Dorsolateral prefrontal cortex (tissue), 120 donors: ENCODE measurements at regions of chr11 and their contacts with region 1.

Region 1: GRCh38 chr11:3091791-3092602 is 34.8 kb upstream of the CARS1 start:
- DNase-seq: peak in 9 of 10 donors; percentile 43 to 84 (median 65)
- H3K4me3 ChIP-seq: no peak overlapping the region
- H3K27ac ChIP-seq: peak overlapping the region in 1 of 59 donors; percentile 30
- H3K27me3 ChIP-seq: no peaks in the 10 kb centered on the region
- CTCF ChIP-seq: peak; percentile 93 to 100 (median 99)

Region 2: DNA sequence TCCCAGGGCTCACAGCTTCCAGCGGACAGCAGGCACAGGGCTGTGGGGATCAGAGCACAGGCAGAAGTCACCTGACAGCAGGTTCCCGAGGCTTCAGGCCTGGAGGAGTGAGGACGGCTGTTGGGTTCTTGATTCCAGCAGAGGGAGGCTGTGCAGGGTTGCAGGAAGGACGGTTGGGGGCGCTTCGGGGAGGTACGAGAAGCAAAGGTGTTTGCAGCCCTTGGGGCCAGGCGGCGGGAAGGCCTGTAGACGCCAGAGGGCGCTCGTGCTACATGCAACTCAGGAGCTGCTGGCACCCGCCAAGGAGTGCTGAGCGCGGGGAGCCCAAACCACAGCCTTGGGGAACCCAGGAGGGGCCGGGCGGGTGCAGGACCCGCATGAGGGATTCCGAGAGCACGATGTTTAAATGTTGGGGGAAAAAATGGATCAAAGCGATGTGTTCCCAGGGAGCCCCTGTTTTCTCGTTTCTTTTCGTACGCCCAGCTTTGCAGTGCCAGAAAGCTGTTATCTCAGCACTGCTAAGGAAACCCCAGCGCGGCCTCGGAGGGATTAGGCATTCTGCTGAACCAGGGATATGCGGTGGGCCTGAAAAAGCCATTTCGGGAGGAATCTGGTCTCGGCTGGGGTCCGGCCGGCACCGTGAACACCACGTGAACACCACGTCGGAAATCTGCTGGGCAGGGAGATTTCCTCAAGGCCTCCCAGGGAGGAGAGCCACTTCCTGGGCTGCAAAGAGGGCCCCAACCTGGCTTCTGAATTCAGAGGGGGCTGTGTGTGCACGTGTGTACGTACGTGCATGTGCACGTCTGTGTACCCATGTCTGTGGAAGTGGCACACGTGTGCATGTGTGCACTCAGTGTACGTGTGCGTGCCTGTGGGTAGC is 559.1 kb before region 1 on chr11:
- intact Hi-C with region 1: loop called in 1 of 2 experiments (anchors 10 kb)
- DNase-seq: peak; percentile 86 to 93 (median 91)
- H3K4me3 ChIP-seq: peak overlapping the region in 54 of 59 donors; percentile 12 to 58 (median 39)
- H3K27ac ChIP-seq: peak overlapping the region in 7 of 59 donors; percentile 5 to 51 (median 33)
- H3K27me3 ChIP-seq: peaks cover 0 to 3% (median 0%) of the 10 kb centered on the region in 45 donors
- CTCF ChIP-seq: peak; percentile 96 to 100 (median 99)

Region 3: GRCh38 chr11:2860636-2861035 is 231.4 kb before region 1 on chr11:
- intact Hi-C with region 1: no loop called
- DNase-seq: no peak
- H3K4me3 ChIP-seq: no peak overlapping the region
- H3K27ac ChIP-seq: no peak overlapping the region
- H3K27me3 ChIP-seq: peaks cover 0 to 22% (median 0%) of the 10 kb centered on the region in 45 donors
- CTCF ChIP-seq: no peak

Region 4: DNA sequence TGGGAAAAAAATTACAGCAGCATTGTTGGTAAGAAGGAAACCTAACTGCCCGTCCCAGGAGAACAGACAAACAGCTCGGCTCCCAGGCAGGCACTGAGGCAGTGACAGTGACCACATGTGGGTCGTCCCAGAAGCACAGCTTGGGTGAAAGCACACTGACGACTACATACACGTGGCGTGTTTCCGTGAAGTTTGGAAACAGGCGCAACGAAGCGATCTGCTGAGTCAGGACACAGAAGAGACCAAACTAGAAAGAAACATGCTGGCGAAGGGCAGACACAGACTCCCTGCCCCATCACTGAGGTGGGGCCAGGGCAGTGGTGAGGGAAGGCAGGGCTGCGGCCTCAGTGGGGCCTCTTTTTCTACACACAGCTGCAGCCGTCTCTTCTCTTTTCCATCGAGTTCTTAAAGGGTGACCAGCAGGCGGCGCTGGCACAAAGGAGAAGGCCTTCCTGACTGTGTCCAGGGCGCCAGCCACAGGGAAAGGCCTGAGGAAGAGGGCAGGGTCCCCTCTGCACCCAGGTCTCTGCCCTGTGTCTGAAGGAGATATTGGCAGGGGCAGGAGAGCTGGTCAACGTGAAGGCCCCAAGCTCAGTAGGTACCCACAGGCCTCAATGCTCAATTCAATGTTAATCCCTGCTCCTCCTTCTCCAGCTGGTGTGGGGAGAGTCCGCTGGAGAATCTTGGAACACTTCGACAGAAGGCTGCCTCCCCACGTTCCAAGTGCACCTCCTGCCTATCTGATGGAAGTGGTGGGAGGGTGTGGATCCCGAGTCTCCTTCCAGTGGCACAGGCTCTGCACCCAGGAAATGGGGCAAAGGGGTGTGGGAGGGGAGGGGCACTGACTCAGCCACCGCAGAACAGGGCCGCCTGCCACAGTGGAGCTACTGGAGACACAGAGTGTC is 54.7 kb before region 1 on chr11:
- intact Hi-C with region 1: loop called (anchors 1 to 5 kb)
- DNase-seq: peak; percentile 58 to 89 (median 86)
- H3K4me3 ChIP-seq: no peak overlapping the region
- H3K27ac ChIP-seq: peak overlapping the region in 58 of 59 donors; percentile 13 to 89 (median 76)
- H3K27me3 ChIP-seq: no peaks in the 10 kb centered on the region
- CTCF ChIP-seq: peak; percentile 67 to 95 (median 86)

Region 5: GRCh38 chr11:3057069-3057963 is 34.7 kb before region 1 on chr11 and contains the start of gene CARS1:
- intact Hi-C with region 1: loop called (anchors 5 kb)
- DNase-seq: peak; percentile 94 to 98 (median 96)
- H3K4me3 ChIP-seq: peak within 1 kb of the TSS; percentile 57 to 97 (median 87)
- H3K27ac ChIP-seq: peak within 1 kb of the TSS in 57 of 59 donors; percentile 23 to 91 (median 83)
- H3K27me3 ChIP-seq: no peaks in the 10 kb centered on the region
- CTCF ChIP-seq: peak in 44 of 56 donors; percentile 5 to 62 (median 34)
- total RNA-seq, gene CARS1: 40.9 to 104 (median 59.2) TPM

Region 6: GRCh38 chr11:3217676-3218482 is 125.9 kb after region 1 on chr11:
- intact Hi-C with region 1: loop called in 1 of 2 experiments (anchors 5 kb)
- DNase-seq: peak in 4 of 10 donors; percentile 16 to 44 (median 20)
- H3K4me3 ChIP-seq: no peak overlapping the region
- H3K27ac ChIP-seq: no peak overlapping the region
- H3K27me3 ChIP-seq: peaks cover 0 to 28% (median 0%) of the 10 kb centered on the region in 45 donors
- CTCF ChIP-seq: no peak